HEK293T (cell line): ENCODE measurements at regions of chr1 and their contacts with region 1.

Region 1: GRCh38 chr1:112955781-112956543 is at the start of gene SLC16A1:
- DNase-seq: peak; percentile 95

Region 2: GRCh38 chr1:112882271-112882744 is 73.7 kb before region 1 on chr1:
- CTCF ChIA-PET with region 1: interaction called, 5 read pairs
- POLR2A ChIA-PET with region 1: interaction called, 11 read pairs
- DNase-seq: no peak

Region 3: GRCh38 chr1:112935461-112936289 is 20.3 kb before region 1 on chr1:
- CTCF ChIA-PET with region 1: interaction called, 4 read pairs
- POLR2A ChIA-PET with region 1: interaction called, 27 read pairs
- DNase-seq: no peak

Region 4: GRCh38 chr1:112985123-112985522 is 29.2 kb after region 1 on chr1:
- CTCF ChIA-PET with region 1: no interaction called
- POLR2A ChIA-PET with region 1: no interaction called
- DNase-seq: no peak

Region 5: GRCh38 chr1:112997781-112998180 is 41.8 kb after region 1 on chr1:
- CTCF ChIA-PET with region 1: no interaction called
- POLR2A ChIA-PET with region 1: no interaction called
- DNase-seq: no peak

Region 6: GRCh38 chr1:113007706-113008364 is 51.9 kb after region 1 on chr1:
- CTCF ChIA-PET with region 1: no interaction called
- POLR2A ChIA-PET with region 1: no interaction called
- DNase-seq: no peak

Region 7: DNA sequence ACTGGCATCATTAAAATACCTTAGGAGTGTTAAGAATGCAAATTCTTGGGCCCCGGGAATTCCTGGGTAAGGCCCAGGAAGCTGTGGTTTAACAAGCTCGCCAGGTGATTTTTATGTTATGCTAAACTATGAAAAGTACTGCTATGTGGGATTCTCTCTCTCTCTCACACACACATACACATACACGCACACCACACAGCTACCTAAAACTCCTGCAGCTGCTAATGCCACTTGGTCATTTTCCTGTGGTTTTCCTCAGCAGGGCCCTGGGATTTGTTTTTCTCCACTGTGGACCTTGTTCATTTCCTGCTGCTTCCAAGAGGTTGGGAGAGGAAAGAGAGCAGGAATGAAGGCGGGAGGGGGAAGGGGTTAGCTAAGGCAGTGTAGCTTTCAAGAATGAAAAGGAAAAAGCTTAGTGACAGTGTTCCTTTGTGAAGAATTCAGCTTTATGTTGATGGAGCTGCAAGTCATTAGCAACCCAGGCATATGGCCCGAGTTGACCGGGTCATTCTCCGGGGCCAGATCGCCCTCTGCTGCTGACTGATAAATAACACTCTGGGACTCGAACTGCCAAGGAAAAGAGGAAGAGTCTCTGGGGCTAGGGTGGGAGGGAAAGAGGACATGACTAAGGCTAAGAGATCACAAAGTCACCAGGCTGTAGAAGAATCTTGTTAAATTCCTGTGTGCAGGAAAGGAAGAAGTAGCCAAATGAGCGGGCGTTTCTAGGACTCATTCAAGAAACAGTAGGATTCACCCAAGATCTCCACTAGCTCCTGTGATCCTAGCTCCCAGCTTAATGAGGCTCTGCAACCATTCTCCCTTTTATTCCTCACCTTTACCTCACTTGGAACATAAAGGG is 86.6 kb after region 1 on chr1:
- CTCF ChIA-PET with region 1: interaction called, 4 read pairs
- POLR2A ChIA-PET with region 1: interaction called, 10 read pairs
- DNase-seq: peak; percentile 75